ENCODE measurements at regions of chr16 and their contacts with region 1.

Region 1: DNA sequence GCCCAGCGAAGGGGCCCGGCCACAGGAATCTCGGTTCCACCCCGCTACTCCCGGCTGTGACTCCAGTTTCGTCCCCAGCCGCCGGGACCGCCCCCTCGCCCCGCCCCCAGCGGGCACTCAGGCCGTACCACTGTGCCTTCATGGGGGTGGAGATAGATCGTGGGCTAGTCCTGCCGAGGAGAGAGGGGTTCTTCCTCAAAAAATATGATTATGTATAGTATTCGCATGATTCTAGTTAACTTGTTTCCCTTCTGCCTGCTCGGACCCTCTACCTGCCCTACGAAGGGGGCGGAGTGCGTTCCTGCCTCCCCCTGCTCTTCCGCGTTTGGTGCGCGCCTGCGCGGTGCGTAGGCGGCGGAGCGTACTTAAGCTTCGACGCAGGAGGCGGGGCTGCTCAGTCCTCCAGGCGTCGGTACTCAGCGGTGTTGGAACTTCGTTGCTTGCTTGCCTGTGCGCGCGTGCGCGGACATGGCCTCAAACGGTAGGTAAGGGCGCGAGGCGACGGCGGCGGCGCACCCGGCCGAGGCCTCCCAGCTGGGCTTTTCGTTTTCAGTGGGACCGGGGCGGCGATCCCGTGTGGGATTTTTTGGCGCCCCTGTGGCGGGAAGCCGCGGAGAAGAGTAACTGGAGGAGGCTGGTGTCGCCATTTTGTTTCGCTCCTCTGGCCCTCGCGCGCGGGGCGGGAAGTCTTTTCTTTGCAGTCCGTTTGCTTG is at the start of gene FUS:
- DNase-seq: peak; percentile 91
- ATAC-seq: peak; percentile 69
- H3K4me3 Mint-ChIP-seq: peak within 1 kb of the TSS; percentile 96
- H3K27ac Mint-ChIP-seq: peak within 1 kb of the TSS; percentile 100
- H3K4me1 Mint-ChIP-seq: peaks cover 57% of the 10 kb centered on the region
- H3K27me3 Mint-ChIP-seq: no peaks in the 10 kb centered on the region
- CTCF ChIP-seq: no peak
- total RNA-seq, gene FUS: 681 and 752 TPM in 2 replicates

Region 2: DNA sequence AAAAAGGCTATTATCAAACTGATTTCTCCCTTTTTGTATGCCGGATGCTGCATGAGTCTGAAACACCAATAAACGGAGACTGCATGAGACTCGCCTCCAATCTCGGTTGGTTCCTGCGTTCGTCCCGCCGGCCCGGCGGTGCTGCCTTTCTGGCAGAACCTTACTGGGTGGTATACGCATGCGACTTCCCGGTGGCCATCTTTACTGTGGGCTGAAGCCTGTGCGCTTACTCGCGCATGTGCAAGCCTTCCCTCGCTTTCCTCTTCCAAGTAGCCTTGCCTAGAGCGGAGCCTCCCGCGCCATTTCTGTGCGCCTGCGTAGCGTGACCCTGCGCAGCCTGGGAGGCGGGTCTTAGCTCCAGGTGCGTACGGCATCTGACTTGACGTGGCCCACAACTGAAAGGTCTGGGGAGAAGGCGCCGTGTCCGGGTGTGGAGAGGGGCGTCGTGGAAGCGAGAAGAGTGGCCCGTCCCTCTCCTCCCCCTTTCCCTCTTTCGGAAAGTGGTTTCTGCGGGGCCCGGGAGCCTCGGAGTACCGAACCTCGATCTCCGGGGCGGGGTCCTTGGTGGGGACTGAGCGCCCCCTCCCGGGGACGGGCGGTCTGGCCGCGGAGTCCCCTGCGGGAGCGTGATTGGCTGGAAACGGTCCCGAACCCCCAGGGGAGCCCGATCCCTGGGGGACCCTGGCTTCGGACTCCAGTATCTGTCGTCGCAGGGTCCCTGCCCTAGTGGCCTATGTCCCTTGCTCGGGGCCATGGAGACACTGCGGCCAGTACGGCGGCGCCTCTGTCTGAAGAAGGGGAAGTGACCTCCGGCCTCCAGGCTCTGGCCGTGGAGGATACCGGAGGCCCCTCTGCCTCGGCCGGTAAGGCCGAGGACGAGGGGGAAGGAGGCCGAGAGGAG is 1363.9 kb before region 1 on chr16 and contains the start of gene PAGR1:
- CTCF ChIA-PET with region 1: no interaction called
- POLR2A ChIA-PET with region 1: no interaction called
- intact Hi-C with region 1: loop called (anchors 5 kb)
- DNase-seq: peak; percentile 97
- ATAC-seq: peak; percentile 74
- H3K4me3 Mint-ChIP-seq: peak within 1 kb of the TSS; percentile 99
- H3K27ac Mint-ChIP-seq: peak within 1 kb of the TSS; percentile 99
- H3K4me1 Mint-ChIP-seq: peaks cover 71% of the 10 kb centered on the region
- H3K27me3 Mint-ChIP-seq: no peaks in the 10 kb centered on the region
- CTCF ChIP-seq: peak; percentile 89
- total RNA-seq, gene PAGR1: 18.6 and 20.3 TPM in 2 replicates

Region 3: GRCh38 chr16:31073968-31074813 is 105.7 kb before region 1 on chr16 and contains the starts of genes ZNF646 and ZNF668:
- CTCF ChIA-PET with region 1: no interaction called
- POLR2A ChIA-PET with region 1: interaction called, 44 read pairs
- intact Hi-C with region 1: loop called (anchors 1 kb)
- DNase-seq: peak; percentile 86
- ATAC-seq: peak; percentile 83
- H3K4me3 Mint-ChIP-seq: peak within 1 kb of the TSS; percentile 96
- H3K27ac Mint-ChIP-seq: peak within 1 kb of the TSS; percentile 91
- H3K4me1 Mint-ChIP-seq: peaks cover 34% of the 10 kb centered on the region
- H3K27me3 Mint-ChIP-seq: no peaks in the 10 kb centered on the region
- CTCF ChIP-seq: no peak
- total RNA-seq, gene ZNF646: 32.4 and 32.5 TPM in 2 replicates
- total RNA-seq, gene ZNF668: 8.3 and 10.1 TPM in 2 replicates

Region 4: DNA sequence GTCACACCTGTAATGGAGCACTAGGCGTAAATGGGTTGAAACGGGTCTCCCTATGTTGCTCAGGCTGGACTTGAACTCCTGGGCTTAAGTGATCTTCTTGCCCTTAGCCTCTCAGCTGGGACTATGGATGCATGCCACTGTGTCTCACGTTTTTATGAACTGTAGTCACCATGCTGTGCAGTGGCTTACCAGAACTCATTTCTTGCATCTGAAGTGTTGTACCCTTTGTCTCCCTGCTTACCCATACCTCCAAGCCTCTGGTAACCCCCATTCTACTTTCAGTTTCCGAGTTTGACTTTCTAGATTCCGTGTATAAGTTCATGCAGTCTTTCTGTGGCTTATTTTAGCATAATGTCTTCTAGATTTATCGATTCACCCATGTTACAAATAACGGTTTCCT is 15.0 kb after region 1 on chr16:
- CTCF ChIA-PET with region 1: no interaction called
- POLR2A ChIA-PET with region 1: interaction called, 146 read pairs
- intact Hi-C with region 1: loop called (anchors 1 kb)
- DNase-seq: no peak
- ATAC-seq: no peak
- H3K4me3 Mint-ChIP-seq: no peak overlapping the region
- H3K27ac Mint-ChIP-seq: no peak overlapping the region
- H3K4me1 Mint-ChIP-seq: peaks cover 43% of the 10 kb centered on the region
- H3K27me3 Mint-ChIP-seq: no peaks in the 10 kb centered on the region
- CTCF ChIP-seq: no peak

Region 5: DNA sequence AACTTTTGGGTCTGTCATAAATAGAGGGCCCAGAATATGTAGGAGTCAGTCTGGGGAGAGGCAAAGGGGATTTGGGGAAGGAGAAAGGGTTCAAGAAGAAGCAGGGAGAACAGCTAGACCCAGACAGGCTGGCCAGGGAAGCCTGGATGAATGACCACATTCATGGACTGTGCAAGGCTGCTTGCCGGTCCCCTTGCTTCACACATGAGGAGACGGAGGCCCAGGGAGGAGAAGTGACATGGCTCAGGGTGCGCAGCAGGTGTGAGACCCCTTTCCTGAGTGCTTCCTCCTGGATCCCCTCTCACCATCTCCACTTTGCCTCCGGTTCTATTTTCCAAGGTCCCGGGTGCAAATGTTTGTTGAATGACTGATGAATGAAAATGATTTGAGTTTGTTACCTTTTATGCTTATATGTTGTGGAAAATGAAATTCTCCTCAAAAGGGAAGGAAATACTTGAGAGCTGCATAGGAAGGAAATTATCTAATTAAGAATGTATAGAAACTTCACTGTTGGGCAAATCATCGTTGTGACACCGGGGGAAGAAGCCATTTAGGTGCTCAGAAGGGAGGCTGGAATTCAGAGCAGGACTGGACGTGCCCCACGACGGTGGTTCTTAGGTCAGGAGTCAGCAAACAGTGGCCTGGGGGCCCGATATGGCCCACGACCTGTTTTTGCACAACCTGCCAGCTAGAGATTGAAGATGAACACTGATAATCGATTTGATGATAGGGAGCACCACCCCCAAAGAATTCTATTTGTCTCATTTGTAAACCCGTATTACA is 80.4 kb after region 1 on chr16:
- CTCF ChIA-PET with region 1: no interaction called
- POLR2A ChIA-PET with region 1: interaction called, 19 read pairs
- intact Hi-C with region 1: no loop called
- DNase-seq: no peak
- ATAC-seq: no peak
- H3K4me3 Mint-ChIP-seq: peak overlapping the region; percentile 85
- H3K27ac Mint-ChIP-seq: peak overlapping the region; percentile 82
- H3K4me1 Mint-ChIP-seq: peaks cover 60% of the 10 kb centered on the region
- H3K27me3 Mint-ChIP-seq: no peaks in the 10 kb centered on the region
- CTCF ChIP-seq: no peak

Region 6: DNA sequence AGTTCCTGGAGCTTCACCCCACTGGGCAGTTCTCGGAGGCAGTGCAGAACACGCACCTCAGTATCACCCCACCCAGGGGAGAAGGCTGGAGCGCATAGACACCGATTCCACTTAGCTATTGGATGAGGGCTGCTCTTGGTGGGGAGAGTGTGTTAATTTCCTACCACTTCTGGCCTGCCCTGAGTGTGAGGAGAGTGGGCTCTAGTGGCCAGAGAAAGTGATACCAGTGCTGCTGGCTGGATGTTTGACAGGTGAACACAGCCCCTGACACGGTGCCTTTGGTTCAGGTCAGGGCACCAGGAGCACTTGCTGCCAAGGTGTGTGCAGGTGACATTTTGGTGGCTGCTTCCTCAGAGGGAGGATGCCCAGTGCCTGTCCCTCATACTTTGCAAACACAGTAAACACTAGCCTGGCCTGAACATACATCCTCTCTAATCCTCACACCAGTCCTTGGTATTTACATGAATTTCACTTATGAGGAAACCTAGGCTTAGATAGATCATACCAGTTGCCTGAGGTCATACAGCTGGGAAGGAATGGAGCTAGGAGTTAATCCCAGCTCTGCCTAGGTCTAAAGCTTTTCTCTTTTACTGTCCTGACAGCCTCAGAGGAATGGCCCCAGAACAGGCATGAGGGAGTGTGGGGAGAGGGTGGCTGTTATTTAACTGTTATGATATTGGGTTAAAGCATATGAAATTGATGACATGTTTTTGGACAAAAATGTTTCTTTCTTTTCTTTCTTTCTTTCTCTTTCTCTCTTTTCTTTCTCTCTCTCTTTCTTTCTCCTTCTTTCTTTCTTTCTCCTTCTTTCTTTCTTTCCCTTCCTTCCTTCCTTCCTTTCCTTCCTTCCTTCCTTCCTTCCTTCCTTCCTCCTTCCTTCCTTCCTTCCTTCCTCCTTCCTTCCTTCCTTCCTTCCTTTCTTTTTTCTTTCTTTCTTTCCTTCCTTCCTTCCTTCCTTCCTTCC is 154.1 kb after region 1 on chr16:
- CTCF ChIA-PET with region 1: no interaction called
- POLR2A ChIA-PET with region 1: interaction called, 13 read pairs
- intact Hi-C with region 1: loop called (anchors 1 kb)
- DNase-seq: no peak
- ATAC-seq: peak; percentile 91
- H3K4me3 Mint-ChIP-seq: no peak overlapping the region
- H3K27ac Mint-ChIP-seq: no peak overlapping the region
- H3K4me1 Mint-ChIP-seq: peaks cover 18% of the 10 kb centered on the region
- H3K27me3 Mint-ChIP-seq: peaks cover 13% of the 10 kb centered on the region
- CTCF ChIP-seq: no peak

Region 7: DNA sequence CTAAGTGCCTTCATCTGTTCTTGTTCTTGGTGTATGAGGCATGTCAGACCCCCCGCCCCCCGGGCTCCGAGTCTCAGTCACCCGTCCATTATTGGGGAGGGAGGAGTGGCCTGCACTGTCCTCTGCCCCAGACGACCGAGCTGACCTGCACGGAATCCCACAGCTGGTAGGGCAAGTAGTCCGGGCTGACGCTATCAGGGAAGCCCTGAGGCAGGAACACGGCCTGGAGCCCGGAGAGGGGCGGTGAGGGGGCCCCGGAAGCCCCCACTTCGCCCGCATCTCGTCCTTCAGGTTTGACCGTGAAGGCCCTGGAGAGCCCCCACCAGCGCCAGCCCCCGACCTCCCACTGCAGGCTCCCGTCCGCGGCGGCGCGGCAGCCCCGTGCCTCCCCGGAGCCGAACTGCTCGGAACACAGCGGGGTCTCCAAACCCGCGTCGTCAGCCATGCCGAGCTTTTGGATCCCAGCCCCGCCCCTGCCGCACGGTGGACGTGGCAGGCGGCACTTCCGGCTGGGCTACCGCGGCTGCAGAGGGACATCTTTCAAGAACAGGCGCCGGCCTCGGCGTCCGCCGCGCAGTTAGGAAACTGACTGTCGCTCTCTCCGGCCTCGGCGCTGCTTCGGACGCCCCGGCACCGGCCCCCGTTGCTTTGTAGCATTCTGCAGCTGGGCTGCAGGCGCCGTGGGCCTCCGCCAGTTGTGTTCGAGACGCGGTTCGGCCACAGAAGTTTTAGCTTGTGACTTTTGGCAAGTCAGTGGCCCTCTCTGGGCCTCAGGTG is 328.2 kb after region 1 on chr16 and contains the start of gene RUSF1:
- CTCF ChIA-PET with region 1: no interaction called
- POLR2A ChIA-PET with region 1: no interaction called
- intact Hi-C with region 1: no loop called
- DNase-seq: peak; percentile 81
- ATAC-seq: peak; percentile 94
- H3K4me3 Mint-ChIP-seq: peak within 1 kb of the TSS; percentile 94
- H3K27ac Mint-ChIP-seq: peak within 1 kb of the TSS; percentile 94
- H3K4me1 Mint-ChIP-seq: peaks cover 55% of the 10 kb centered on the region
- H3K27me3 Mint-ChIP-seq: no peaks in the 10 kb centered on the region
- CTCF ChIP-seq: no peak
- total RNA-seq, gene RUSF1: 58.6 and 59.7 TPM in 2 replicates

Region 8: GRCh38 chr16:31873556-31874365 is 693.9 kb after region 1 on chr16 and contains the start of gene ZNF267:
- CTCF ChIA-PET with region 1: no interaction called
- POLR2A ChIA-PET with region 1: interaction called, 11 read pairs
- intact Hi-C with region 1: loop called (anchors 10 kb)
- DNase-seq: peak; percentile 79
- ATAC-seq: peak; percentile 69
- H3K4me3 Mint-ChIP-seq: peak within 1 kb of the TSS; percentile 83
- H3K27ac Mint-ChIP-seq: peak within 1 kb of the TSS; percentile 87
- H3K4me1 Mint-ChIP-seq: peaks cover 83% of the 10 kb centered on the region
- H3K27me3 Mint-ChIP-seq: no peaks in the 10 kb centered on the region
- CTCF ChIP-seq: no peak
- total RNA-seq, gene ZNF267: 93.5 and 99.0 TPM in 2 replicates